ENCODE measurements at regions of chr2 and their contacts with region 1.

Region 1: DNA sequence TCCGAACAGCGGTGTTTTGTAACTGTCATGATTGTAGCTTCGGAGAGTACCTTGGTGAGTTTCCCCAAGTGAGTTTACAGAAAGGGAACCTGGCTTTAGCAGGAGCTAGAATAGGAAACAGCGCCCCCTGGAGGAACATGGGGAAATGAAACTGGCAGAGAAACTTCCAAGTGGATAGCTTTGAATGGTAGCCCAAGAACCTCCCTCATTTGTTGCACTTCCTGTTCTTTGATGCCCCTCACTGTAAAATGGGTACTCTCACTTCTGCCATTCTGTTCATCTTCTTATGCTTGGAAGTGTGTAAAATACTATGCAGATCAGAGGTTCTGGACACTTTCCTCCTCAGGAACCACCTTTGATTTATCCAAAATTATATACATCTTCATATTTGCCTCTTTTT is 36.2 kb downstream of the CHST10 start:
- DNase-seq: peak in 4 of 5 donors; percentile 65 to 75 (median 68)
- ATAC-seq: peak; percentile 47 to 71 (median 58)
- H3K4me3 ChIP-seq: no peak overlapping the region
- H3K27ac ChIP-seq: no peak overlapping the region
- H3K4me1 ChIP-seq: no peaks in the 10 kb centered on the region
- H3K27me3 ChIP-seq: no peaks in the 10 kb centered on the region
- CTCF ChIP-seq: peak; percentile 78 to 92 (median 86)
- POLR2A ChIP-seq: no peak

Region 2: GRCh38 chr2:99818842-99819241 is 562.4 kb before region 1 on chr2:
- intact Hi-C with region 1: loop called in 1 of 10 experiments (anchors 5 kb)
- DNase-seq: no peak
- ATAC-seq: no peak
- H3K4me3 ChIP-seq: no peak overlapping the region
- H3K27ac ChIP-seq: no peak overlapping the region
- H3K4me1 ChIP-seq: no peaks in the 10 kb centered on the region
- H3K27me3 ChIP-seq: no peaks in the 10 kb centered on the region
- CTCF ChIP-seq: peak in 6 of 12 donors; percentile 14 to 34 (median 24)
- POLR2A ChIP-seq: no peak

Region 3: GRCh38 chr2:100262555-100263320 is 118.5 kb before region 1 on chr2:
- intact Hi-C with region 1: loop called (anchors 1 to 5 kb)
- DNase-seq: peak; percentile 61 to 80 (median 63)
- ATAC-seq: peak; percentile 35 to 77 (median 52)
- H3K4me3 ChIP-seq: no peak overlapping the region
- H3K27ac ChIP-seq: peak overlapping the region in 1 of 12 donors; percentile 23
- H3K4me1 ChIP-seq: peaks cover 0 to 16% (median 0%) of the 10 kb centered on the region in 12 donors
- H3K27me3 ChIP-seq: no peaks in the 10 kb centered on the region
- CTCF ChIP-seq: peak; percentile 93 to 98 (median 97)
- POLR2A ChIP-seq: no peak